ENCODE measurements at regions of chr19 and their contacts with region 1.

Region 1: DNA sequence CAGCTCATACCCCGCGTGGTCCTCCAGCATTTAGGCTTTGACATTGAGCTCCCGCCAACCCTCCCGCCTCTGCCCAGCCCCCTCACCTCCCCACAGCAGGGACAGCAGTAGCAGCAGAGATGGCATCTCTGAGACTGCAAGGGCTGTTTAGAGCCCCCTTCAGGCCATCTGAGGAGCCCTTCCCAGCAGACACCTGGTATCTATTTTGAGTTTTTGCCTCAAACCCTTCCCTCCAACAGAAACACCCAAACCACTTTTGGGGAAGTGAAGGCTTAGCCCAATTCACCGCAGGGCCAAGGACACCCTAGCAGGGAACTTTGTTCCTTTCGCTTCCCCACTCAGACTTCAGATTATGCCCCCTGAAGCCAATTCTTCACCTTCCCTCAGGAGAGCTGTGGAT is 6.3 kb upstream of the ZNF175 start:
- DNase-seq: no peak
- ATAC-seq: no peak
- H3K4me3 ChIP-seq: no peak overlapping the region
- H3K27ac ChIP-seq: no peak overlapping the region
- H3K4me1 ChIP-seq: peaks cover 0 to 8% (median 0%) of the 10 kb centered on the region in 12 donors
- H3K27me3 ChIP-seq: peaks cover 0 to 59% (median 7%) of the 10 kb centered on the region in 9 donors
- CTCF ChIP-seq: no peak
- POLR2A ChIP-seq: no peak

Region 2: DNA sequence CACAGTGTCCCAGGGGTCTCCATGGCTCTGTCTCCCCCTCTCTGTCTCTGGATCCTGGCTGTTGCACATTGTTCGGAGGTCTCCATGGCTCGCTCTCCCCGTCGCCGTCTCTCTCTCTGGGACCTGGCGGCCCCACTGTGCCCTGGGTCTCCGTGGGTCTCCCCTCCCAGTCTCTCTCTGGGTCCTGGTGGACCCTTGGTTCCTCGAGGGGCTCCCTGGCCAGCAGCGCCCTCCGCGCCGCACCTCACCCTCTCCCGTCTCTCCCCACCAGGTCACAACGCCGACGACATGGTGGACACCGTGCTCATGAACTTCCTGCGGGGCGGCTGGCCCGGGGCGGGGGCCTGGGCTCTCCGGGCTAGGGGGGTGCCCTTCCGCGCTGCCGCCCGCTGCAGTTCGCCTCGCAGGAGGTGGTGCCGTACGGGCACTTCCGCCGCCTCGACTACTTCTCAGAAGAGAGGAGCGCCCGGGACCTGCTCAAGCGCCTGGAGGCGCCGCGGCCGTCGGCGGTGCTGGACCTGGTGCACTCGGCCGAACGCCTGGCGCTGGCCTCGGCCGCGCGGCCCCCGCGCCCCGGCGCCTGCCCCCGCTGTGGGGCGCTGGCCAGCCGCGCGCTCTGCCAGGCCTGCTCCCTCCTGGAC is 36.3 kb after region 1 on chr19:
- intact Hi-C with region 1: loop called in 1 of 10 experiments (anchors 5 kb)
- DNase-seq: no peak
- ATAC-seq: peak in 1 of 4 donors; percentile 12
- H3K4me3 ChIP-seq: peak overlapping the region in 2 of 12 donors; percentile 15 to 21
- H3K27ac ChIP-seq: no peak overlapping the region
- H3K4me1 ChIP-seq: peaks cover 0 to 7% (median 0%) of the 10 kb centered on the region in 12 donors
- H3K27me3 ChIP-seq: peaks cover 5 to 53% (median 14%) of the 10 kb centered on the region in 9 donors
- CTCF ChIP-seq: no peak
- POLR2A ChIP-seq: no peak

Measured in heart left ventricle (tissue), 16 donors.